ENCODE measurements at regions of chr2 and their contacts with region 1.

Region 1: DNA sequence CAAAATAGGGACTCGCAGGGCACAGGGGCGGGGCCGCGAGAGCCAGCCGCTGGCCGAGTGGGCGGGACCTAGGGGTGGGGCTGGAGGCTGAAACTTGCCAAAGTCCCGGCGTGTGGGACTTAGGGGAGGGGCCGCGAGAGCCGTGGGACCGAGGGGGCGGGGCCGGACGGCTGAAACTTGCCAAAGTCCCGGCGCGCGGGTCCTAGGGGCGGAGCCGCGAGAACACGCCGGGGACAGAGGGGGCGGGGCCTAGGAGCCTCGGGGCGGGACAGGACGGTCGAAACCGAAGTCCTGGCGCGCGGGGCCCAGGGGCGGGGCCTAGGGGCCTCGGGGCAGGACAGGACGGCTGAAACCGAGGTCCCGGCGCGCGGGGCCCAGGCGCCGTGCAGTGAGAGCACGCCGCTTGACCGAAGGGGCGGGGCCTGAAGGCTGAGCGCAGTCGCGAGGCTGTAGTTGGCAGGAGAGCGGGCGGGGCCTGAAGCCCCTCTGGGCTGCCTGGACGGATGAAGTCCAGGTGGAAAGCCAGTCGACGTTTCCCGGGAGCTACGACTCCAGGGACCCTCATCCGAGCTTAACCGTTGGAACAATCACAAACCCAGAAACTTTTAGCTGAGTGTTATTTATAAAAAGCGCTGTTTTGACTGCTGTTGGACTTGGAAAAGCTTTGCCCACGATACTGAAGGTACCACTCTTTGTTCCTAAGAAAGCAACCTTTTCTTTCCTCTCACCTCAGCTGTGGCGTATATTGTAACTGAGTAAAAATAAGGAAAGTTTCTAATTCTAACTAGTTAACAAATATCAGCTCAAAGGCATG is 475 bp upstream of the BARD1 start:
- H3K4me3 Mint-ChIP-seq: peak overlapping the region; percentile 99
- H3K27ac Mint-ChIP-seq: peak overlapping the region; percentile 87
- H3K4me1 Mint-ChIP-seq: peaks cover 19% of the 10 kb centered on the region
- H3K27me3 Mint-ChIP-seq: peaks cover 12% of the 10 kb centered on the region

Region 2: DNA sequence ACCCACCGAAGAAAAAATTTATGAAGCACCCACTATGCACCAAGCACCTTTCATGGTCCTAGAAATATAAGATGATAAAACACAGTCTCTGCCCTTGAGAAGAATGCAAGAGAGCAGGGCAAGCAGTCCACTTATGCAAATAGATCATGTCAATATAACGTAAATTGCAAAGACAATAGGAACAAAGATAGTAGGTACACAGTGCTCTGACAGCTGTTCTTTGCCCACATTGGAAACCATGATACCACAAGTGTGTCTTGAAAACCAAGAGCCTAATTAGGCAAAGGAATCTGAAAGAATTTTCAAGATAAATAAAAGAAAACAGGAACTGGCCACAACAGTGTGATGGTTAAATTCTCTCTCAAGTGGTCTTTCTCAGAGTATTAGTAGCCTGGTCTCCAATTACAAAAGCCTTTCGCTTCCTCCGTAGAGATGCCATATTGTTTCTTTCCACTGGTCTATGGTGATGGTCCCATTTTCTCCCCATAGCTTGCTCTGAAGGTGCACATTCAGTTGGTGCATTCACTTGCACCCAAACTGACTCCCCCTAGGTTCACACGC is 290.6 kb before region 1 on chr2:
- intact Hi-C with region 1: no loop called
- H3K4me3 Mint-ChIP-seq: no peak overlapping the region
- H3K27ac Mint-ChIP-seq: no peak overlapping the region
- H3K4me1 Mint-ChIP-seq: no peaks in the 10 kb centered on the region
- H3K27me3 Mint-ChIP-seq: no peaks in the 10 kb centered on the region

Region 3: GRCh38 chr2:215028231-215028630 is 218.3 kb after region 1 on chr2:
- intact Hi-C with region 1: no loop called
- H3K4me3 Mint-ChIP-seq: no peak overlapping the region
- H3K27ac Mint-ChIP-seq: no peak overlapping the region
- H3K4me1 Mint-ChIP-seq: no peaks in the 10 kb centered on the region
- H3K27me3 Mint-ChIP-seq: no peaks in the 10 kb centered on the region

Region 4: GRCh38 chr2:215311625-215312396 is 501.9 kb after region 1 on chr2 and contains the start of gene ATIC:
- intact Hi-C with region 1: loop called (anchors 5 kb)
- H3K4me3 Mint-ChIP-seq: peak within 1 kb of the TSS; percentile 86
- H3K27ac Mint-ChIP-seq: peak within 1 kb of the TSS; percentile 87
- H3K4me1 Mint-ChIP-seq: peaks cover 26% of the 10 kb centered on the region
- H3K27me3 Mint-ChIP-seq: no peaks in the 10 kb centered on the region